ENCODE measurements at regions of chr5 and their contacts with region 1.

Region 1: GRCh38 chr5:73201547-73202513 is 28.8 kb downstream of the TMEM174 start:
- DNase-seq: peak; percentile 78
- ATAC-seq: peak; percentile 98
- H3K4me3 ChIP-seq: no peak overlapping the region
- H3K27ac ChIP-seq: no peak overlapping the region
- H3K4me1 ChIP-seq: peaks cover 0 to 13% of the 10 kb centered on the region in 2 experiments; a peak in 3 of 4 replicates
- H3K27me3 ChIP-seq: no peaks in the 10 kb centered on the region
- CTCF ChIP-seq: peak; percentile 81 to 94 (median 87)
- POLR2A ChIP-seq: no peak
- RAD21 ChIP-seq: peak; percentile 89

Region 2: DNA sequence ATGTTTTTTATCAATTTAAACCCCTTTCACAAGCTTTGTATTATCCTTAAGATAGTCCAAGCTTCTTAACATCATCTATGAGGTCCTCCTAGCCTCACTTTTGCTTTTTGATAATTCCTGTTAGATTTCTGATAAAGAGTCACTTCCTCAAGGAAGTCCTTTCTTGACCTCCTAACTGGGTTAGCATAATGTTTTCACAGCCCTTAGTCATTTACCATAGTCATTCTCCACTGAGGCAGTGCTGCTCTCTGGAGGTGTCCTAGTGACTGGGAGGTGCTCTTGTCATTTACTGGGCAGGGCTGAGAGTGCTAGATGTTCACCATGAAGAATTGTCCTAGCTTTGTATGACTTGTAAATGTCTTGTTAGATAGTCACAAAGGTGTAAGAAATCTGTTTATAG is 359.0 kb before region 1 on chr5:
- CTCF ChIA-PET with region 1: no interaction called
- POLR2A ChIA-PET with region 1: no interaction called
- RAD21 ChIA-PET with region 1: no interaction called
- intact Hi-C with region 1: no loop called
- DNase-seq: peak; percentile 32
- ATAC-seq: peak; percentile 83
- H3K4me3 ChIP-seq: no peak overlapping the region
- H3K27ac ChIP-seq: no peak overlapping the region
- H3K4me1 ChIP-seq: peaks cover 12 to 33% of the 10 kb centered on the region in 2 experiments
- H3K27me3 ChIP-seq: no peaks in the 10 kb centered on the region
- CTCF ChIP-seq: peak; percentile 19 to 45 (median 40); a peak in 3 of 6 replicates
- POLR2A ChIP-seq: no peak
- RAD21 ChIP-seq: peak; percentile 59

Region 3: DNA sequence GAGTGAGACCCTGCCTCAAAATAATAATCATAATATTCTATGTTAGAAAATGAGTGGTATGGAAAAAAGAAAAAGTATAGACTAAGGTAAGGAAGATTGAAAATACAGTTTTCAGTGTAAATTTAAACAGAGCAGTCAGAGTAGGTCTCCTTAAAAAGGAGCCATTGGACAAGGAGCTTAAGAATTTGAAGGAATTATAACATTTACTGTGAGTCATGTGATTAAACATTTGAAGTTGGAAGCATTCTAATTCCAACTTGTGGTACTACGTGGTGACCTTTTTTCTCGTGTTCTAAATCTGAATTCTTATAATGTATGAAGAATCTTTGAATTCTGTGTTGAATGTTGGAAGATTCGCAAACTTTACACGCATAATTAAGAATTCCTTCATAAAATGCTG is 120.7 kb before region 1 on chr5:
- CTCF ChIA-PET with region 1: interaction called, 4 read pairs
- POLR2A ChIA-PET with region 1: no interaction called
- RAD21 ChIA-PET with region 1: no interaction called
- intact Hi-C with region 1: loop called (anchors 5 kb)
- DNase-seq: no peak
- ATAC-seq: no peak
- H3K4me3 ChIP-seq: no peak overlapping the region
- H3K27ac ChIP-seq: no peak overlapping the region
- H3K4me1 ChIP-seq: no peaks in the 10 kb centered on the region
- H3K27me3 ChIP-seq: no peaks in the 10 kb centered on the region
- CTCF ChIP-seq: no peak
- POLR2A ChIP-seq: no peak
- RAD21 ChIP-seq: no peak

Region 4: DNA sequence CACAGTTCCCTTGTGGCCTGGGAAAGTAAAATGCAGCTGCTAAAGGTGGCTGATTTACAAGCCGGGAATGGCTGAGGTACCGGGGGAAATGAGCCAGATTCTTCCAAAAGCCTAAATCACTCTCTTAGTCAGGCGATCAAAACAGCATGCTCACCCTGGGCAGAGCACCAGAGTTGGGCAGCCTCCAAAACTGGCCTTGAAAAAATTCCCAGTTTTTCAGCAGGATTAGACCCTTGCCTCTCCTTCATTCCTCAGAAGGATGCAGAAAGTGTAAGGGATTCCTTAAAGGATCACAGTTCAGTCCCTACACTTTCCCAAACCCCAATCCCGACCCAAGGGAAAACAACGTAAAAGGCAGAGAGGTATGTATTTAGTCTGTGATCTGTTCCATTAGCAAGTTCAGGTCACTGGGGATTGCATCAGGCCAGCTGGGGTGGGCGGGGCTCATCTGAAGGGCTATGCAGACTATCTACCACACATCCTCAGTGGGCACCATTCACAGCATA is 11.9 kb before region 1 on chr5:
- CTCF ChIA-PET with region 1: interaction called, 16 read pairs
- POLR2A ChIA-PET with region 1: no interaction called
- RAD21 ChIA-PET with region 1: no interaction called
- intact Hi-C with region 1: no loop called
- DNase-seq: no peak
- ATAC-seq: no peak
- H3K4me3 ChIP-seq: no peak overlapping the region
- H3K27ac ChIP-seq: no peak overlapping the region
- H3K4me1 ChIP-seq: no peaks in the 10 kb centered on the region
- H3K27me3 ChIP-seq: no peaks in the 10 kb centered on the region
- CTCF ChIP-seq: no peak
- POLR2A ChIP-seq: no peak
- RAD21 ChIP-seq: no peak

Measured in HCT116 (cell line).